ENCODE measurements at regions of chr15 and their contacts with region 1.

Region 1: DNA sequence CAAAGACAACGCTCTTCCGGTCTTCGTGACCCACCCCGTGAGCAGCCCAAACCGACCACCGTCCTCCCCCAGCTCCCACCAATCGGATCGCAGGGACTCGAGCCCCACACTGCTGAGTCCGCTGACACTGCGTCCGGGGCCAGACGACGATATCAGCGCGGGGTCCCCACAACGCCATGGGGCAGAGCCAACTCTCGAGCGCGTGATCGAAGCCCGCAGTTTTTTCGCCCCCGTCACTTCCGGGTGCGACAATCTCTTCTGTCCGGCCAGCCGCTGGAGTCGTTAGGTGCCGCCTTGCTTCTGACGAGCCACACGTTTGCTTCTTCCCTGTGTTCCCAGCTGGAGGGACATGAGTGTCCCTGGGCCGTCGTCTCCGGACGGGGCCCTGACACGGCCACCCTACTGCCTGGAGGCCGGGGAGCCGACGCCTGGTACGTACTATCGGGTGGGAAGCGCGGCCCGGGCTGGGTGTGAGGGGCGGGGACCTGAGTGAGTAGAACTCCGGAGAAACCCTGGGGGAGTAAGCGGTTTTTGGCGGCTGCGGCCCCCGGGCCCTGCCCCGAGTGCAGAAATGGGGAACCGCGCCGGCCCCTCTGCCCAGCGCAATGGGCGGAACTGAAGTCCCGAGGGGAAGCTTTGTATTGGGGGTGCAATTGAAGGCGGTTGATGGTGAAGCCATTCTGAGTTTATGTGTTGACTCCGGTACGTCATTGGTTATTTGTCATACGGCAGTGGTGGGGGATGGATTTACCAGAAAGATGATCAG is at the start of gene BLOC1S6:
- DNase-seq: peak; percentile 88
- H3K4me3 Mint-ChIP-seq: peak within 1 kb of the TSS; percentile 73
- H3K27ac Mint-ChIP-seq: peak within 1 kb of the TSS; percentile 100
- H3K4me1 Mint-ChIP-seq: peaks cover 16% of the 10 kb centered on the region
- H3K27me3 Mint-ChIP-seq: peaks cover 4% of the 10 kb centered on the region
- CTCF ChIP-seq: no peak
- total RNA-seq, gene BLOC1S6: 54.6 and 68.5 TPM in 2 replicates

Region 2: GRCh38 chr15:45236816-45237516 is 350.3 kb before region 1 on chr15:
- CTCF ChIA-PET with region 1: no interaction called
- POLR2A ChIA-PET with region 1: no interaction called
- intact Hi-C with region 1: no loop called
- DNase-seq: no peak
- H3K4me3 Mint-ChIP-seq: no peak overlapping the region
- H3K27ac Mint-ChIP-seq: no peak overlapping the region
- H3K4me1 Mint-ChIP-seq: no peaks in the 10 kb centered on the region
- H3K27me3 Mint-ChIP-seq: no peaks in the 10 kb centered on the region
- CTCF ChIP-seq: no peak

Region 3: DNA sequence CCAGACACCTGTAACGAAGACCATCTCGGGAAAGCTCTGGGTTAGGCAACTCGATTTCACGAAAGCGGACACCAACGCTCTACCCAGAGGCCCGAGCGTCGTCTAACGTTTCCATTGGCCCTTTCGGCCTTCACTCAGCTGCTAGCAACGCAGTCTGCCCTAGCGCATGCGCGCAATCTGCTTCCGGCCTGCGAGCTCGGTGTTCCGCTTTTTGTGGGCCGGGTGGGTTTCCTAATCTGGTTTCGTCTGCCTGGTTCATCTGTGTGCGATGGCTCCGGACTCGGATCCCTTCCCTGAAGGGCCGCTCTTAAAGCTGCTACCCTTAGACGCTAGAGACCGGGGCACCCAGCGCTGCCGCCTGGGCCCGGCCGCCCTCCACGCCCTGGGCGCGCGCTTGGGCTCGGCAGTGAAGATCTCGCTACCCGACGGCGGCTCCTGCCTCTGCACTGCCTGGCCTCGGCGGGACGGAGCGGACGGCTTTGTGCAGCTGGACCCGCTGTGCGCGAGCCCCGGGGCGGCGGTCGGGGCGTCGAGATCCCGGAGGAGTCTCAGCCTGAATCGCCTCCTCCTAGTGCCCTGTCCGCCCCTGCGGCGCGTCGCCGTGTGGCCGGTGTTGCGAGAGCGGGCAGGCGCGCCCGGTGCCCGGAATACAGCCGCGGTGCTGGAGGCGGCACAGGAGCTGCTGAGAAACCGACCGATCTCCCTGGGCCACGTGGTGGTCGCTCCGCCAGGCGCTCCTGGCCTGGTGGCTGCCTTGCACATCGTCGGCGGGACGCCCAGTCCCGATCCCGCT is 184.9 kb before region 1 on chr15:
- CTCF ChIA-PET with region 1: interaction called, 3 read pairs
- POLR2A ChIA-PET with region 1: interaction called, 29 read pairs
- intact Hi-C with region 1: no loop called
- DNase-seq: peak; percentile 99
- H3K4me3 Mint-ChIP-seq: peak overlapping the region; percentile 91
- H3K27ac Mint-ChIP-seq: peak overlapping the region; percentile 88
- H3K4me1 Mint-ChIP-seq: peaks cover 27% of the 10 kb centered on the region
- H3K27me3 Mint-ChIP-seq: no peaks in the 10 kb centered on the region
- CTCF ChIP-seq: no peak

Region 4: GRCh38 chr15:45522328-45523160 is 64.7 kb before region 1 on chr15 and contains the start of gene SLC30A4:
- CTCF ChIA-PET with region 1: interaction called, 6 read pairs
- POLR2A ChIA-PET with region 1: interaction called, 18 read pairs
- intact Hi-C with region 1: loop called (anchors 2 kb)
- DNase-seq: peak; percentile 37
- H3K4me3 Mint-ChIP-seq: peak within 1 kb of the TSS; percentile 89
- H3K27ac Mint-ChIP-seq: peak within 1 kb of the TSS; percentile 19
- H3K4me1 Mint-ChIP-seq: peaks cover 15% of the 10 kb centered on the region
- H3K27me3 Mint-ChIP-seq: no peaks in the 10 kb centered on the region
- CTCF ChIP-seq: peak; percentile 26
- total RNA-seq, gene SLC30A4: 3.4 and 3.8 TPM in 2 replicates

Region 5: GRCh38 chr15:45604326-45604725 is 17.0 kb after region 1 on chr15:
- CTCF ChIA-PET with region 1: interaction called, 3 read pairs
- POLR2A ChIA-PET with region 1: interaction called, 15 read pairs
- intact Hi-C with region 1: no loop called
- DNase-seq: no peak
- H3K4me3 Mint-ChIP-seq: no peak overlapping the region
- H3K27ac Mint-ChIP-seq: no peak overlapping the region
- H3K4me1 Mint-ChIP-seq: no peaks in the 10 kb centered on the region
- H3K27me3 Mint-ChIP-seq: no peaks in the 10 kb centered on the region
- CTCF ChIP-seq: no peak

Region 6: DNA sequence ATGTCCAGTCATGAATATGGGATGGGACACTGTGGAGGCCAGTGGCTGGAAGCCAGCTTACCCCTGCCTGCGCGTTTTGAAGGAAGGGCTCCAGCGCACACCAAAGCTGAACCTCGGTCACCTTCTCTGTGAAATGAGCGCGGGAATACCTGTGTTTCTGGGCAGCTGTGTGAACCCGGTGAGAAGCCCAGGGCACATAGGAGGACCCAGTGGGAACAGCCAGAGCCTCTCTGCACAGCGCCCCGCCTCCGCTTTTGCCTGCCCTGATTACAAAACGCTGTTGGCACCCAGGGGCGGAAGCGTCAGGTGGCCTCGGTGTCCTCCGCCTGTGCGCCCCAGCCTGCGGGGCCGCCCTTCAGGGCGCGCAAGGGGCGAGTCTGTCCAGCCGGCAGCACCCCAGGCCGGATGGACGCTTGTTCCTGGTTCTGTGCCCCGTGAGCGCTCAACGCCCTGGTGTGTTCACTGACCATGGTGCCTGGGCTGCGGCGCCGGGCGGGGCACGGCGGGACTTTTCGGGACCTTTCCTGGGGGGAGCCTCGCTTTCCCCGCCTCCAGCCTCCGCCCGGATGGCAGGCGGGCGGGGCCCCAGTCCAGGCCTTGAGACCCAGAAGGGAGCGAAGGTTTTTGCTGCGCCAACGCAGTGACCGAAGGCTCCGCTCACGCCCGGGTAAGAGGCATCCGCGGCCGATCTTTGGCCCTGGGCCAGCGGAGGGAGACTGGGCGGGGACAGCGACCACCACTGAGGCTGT is 47.3 kb after region 1 on chr15 and contains the start of gene SQOR:
- CTCF ChIA-PET with region 1: interaction called, 4 read pairs
- POLR2A ChIA-PET with region 1: interaction called, 51 read pairs
- intact Hi-C with region 1: no loop called
- DNase-seq: peak; percentile 90
- H3K4me3 Mint-ChIP-seq: peak within 1 kb of the TSS; percentile 99
- H3K27ac Mint-ChIP-seq: peak within 1 kb of the TSS; percentile 92
- H3K4me1 Mint-ChIP-seq: peaks cover 34% of the 10 kb centered on the region
- H3K27me3 Mint-ChIP-seq: no peaks in the 10 kb centered on the region
- CTCF ChIP-seq: no peak
- total RNA-seq, gene SQOR: 49.8 and 75.0 TPM in 2 replicates

Region 7: GRCh38 chr15:45648521-45649200 is 61.4 kb after region 1 on chr15:
- CTCF ChIA-PET with region 1: interaction called, 3 read pairs
- POLR2A ChIA-PET with region 1: interaction called, 14 read pairs
- intact Hi-C with region 1: no loop called
- DNase-seq: peak; percentile 61
- H3K4me3 Mint-ChIP-seq: peak overlapping the region; percentile 46
- H3K27ac Mint-ChIP-seq: peak overlapping the region; percentile 82
- H3K4me1 Mint-ChIP-seq: peaks cover 19% of the 10 kb centered on the region
- H3K27me3 Mint-ChIP-seq: no peaks in the 10 kb centered on the region
- CTCF ChIP-seq: no peak

Region 8: GRCh38 chr15:45795440-45796069 is 208.3 kb after region 1 on chr15:
- CTCF ChIA-PET with region 1: no interaction called
- POLR2A ChIA-PET with region 1: no interaction called
- intact Hi-C with region 1: no loop called
- DNase-seq: peak; percentile 70
- H3K4me3 Mint-ChIP-seq: no peak overlapping the region
- H3K27ac Mint-ChIP-seq: no peak overlapping the region
- H3K4me1 Mint-ChIP-seq: peaks cover 5% of the 10 kb centered on the region
- H3K27me3 Mint-ChIP-seq: peaks cover 27% of the 10 kb centered on the region
- CTCF ChIP-seq: peak; percentile 67